A673 (cell line): ENCODE measurements at regions of chr17 and their contacts with region 1.

Region 1: GRCh38 chr17:39450847-39451581 is at the start of gene MED1:
- DNase-seq: peak; percentile 95
- H3K4me3 ChIP-seq: peak within 1 kb of the TSS; percentile 91
- H3K27ac ChIP-seq: peak within 1 kb of the TSS; percentile 91
- H3K4me1 ChIP-seq: no peaks in the 10 kb centered on the region
- H3K27me3 ChIP-seq: no peaks in the 10 kb centered on the region
- CTCF ChIP-seq: no peak
- total RNA-seq, gene MED1: 39.2 and 41.5 TPM in 2 replicates

Region 2: GRCh38 chr17:38958756-38959155 is 492.3 kb before region 1 on chr17:
- CTCF ChIA-PET with region 1: no interaction called
- POLR2A ChIA-PET with region 1: no interaction called
- intact Hi-C with region 1: no loop called
- DNase-seq: no peak
- H3K4me3 ChIP-seq: no peak overlapping the region
- H3K27ac ChIP-seq: no peak overlapping the region
- H3K4me1 ChIP-seq: no peaks in the 10 kb centered on the region
- H3K27me3 ChIP-seq: no peaks in the 10 kb centered on the region
- CTCF ChIP-seq: no peak

Region 3: DNA sequence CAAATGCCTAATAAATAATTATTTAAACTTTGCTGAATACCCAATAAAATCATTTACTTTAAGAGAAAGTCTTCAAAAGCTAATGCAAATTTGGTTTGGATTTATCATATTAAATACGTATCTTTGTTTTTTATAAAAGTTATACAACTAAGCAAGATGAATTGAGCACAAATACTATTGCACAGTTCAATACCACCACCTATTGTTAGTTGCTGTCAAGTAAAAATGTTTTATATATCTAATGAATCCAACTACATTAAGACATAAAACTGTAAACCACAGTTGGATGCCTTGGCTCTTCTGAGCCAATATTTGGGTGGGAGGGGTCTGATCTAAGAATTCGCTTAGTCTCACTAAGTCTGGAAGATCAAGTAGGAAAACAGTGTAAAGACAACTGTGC is 57.3 kb before region 1 on chr17:
- CTCF ChIA-PET with region 1: no interaction called
- POLR2A ChIA-PET with region 1: no interaction called
- intact Hi-C with region 1: no loop called
- DNase-seq: peak; percentile 1
- H3K4me3 ChIP-seq: no peak overlapping the region
- H3K27ac ChIP-seq: no peak overlapping the region
- H3K4me1 ChIP-seq: no peaks in the 10 kb centered on the region
- H3K27me3 ChIP-seq: no peaks in the 10 kb centered on the region
- CTCF ChIP-seq: no peak

Region 4: DNA sequence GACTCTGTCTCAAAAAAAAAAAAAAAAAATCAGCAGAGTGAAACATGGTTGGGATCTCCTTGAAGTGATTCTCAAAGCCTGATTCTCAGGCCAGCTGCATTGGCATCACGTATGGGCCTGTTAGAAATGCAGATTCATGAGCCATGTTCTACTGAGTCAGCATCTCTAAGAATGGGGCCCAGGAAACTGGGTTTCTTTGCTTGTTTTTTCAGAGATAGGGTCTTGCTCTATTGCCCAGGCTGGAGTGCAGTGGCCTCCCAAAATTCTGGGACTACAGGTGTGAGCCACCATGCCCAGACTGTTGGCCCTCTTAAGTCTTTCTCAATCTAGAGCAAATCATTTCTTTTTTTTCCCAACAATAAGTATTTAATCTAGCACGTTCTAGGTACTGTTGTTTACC is 58.0 kb after region 1 on chr17:
- CTCF ChIA-PET with region 1: no interaction called
- POLR2A ChIA-PET with region 1: interaction called, 14 read pairs
- intact Hi-C with region 1: no loop called
- DNase-seq: no peak
- H3K4me3 ChIP-seq: no peak overlapping the region
- H3K27ac ChIP-seq: no peak overlapping the region
- H3K4me1 ChIP-seq: no peaks in the 10 kb centered on the region
- H3K27me3 ChIP-seq: no peaks in the 10 kb centered on the region
- CTCF ChIP-seq: no peak